Mammary epithelial cell (primary cell): ENCODE measurements at regions of chr13 and their contacts with region 1.

Region 1: GRCh38 chr13:22114630-22115311 is 443.9 kb downstream of the FGF9 start:
- DNase-seq: no peak
- H3K4me3 ChIP-seq: no peak overlapping the region
- H3K27ac ChIP-seq: no peak overlapping the region
- H3K4me1 ChIP-seq: no peaks in the 10 kb centered on the region
- H3K27me3 ChIP-seq: no peaks in the 10 kb centered on the region
- CTCF ChIP-seq: no peak

Region 2: DNA sequence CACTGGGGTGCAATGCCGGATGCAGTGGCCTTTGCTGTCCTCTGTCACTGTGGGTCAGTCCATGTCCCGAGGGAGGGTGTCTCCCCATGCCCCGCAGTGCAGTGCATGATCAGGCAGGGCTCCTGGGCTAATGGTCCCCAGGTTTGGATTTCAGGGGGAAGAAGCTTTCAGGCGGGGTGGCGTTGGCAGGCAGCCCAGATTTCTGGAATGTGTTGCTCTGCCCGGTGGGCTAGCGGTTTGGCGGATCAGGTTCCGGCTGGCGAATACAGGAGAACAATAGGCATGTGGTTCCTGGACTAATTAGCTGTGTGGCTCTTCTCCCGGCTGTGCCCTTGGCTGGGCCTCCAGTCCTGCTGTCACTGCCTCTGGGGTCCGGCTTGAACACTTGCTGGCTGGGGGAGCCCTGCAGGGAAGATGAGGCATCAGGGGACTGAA is 302.6 kb before region 1 on chr13:
- CTCF ChIA-PET with region 1: no interaction called
- dilution Hi-C with region 1: no loop called
- in situ Hi-C with region 1: no loop called
- intact Hi-C with region 1: no loop called
- DNase-seq: peak; percentile 2
- H3K4me3 ChIP-seq: no peak overlapping the region
- H3K27ac ChIP-seq: no peak overlapping the region
- H3K4me1 ChIP-seq: no peaks in the 10 kb centered on the region
- H3K27me3 ChIP-seq: no peaks in the 10 kb centered on the region
- CTCF ChIP-seq: no peak

Region 3: GRCh38 chr13:21948769-21949474 is 165.8 kb before region 1 on chr13:
- CTCF ChIA-PET with region 1: no interaction called
- dilution Hi-C with region 1: no loop called
- in situ Hi-C with region 1: no loop called
- intact Hi-C with region 1: no loop called
- DNase-seq: no peak
- H3K4me3 ChIP-seq: no peak overlapping the region
- H3K27ac ChIP-seq: no peak overlapping the region
- H3K4me1 ChIP-seq: no peaks in the 10 kb centered on the region
- H3K27me3 ChIP-seq: no peaks in the 10 kb centered on the region
- CTCF ChIP-seq: no peak

Region 4: GRCh38 chr13:22144806-22145205 is 30.0 kb after region 1 on chr13:
- CTCF ChIA-PET with region 1: no interaction called
- dilution Hi-C with region 1: loop called (anchors 5 kb)
- in situ Hi-C with region 1: no loop called
- intact Hi-C with region 1: no loop called
- DNase-seq: no peak
- H3K4me3 ChIP-seq: no peak overlapping the region
- H3K27ac ChIP-seq: no peak overlapping the region
- H3K4me1 ChIP-seq: no peaks in the 10 kb centered on the region
- H3K27me3 ChIP-seq: no peaks in the 10 kb centered on the region
- CTCF ChIP-seq: no peak

Region 5: DNA sequence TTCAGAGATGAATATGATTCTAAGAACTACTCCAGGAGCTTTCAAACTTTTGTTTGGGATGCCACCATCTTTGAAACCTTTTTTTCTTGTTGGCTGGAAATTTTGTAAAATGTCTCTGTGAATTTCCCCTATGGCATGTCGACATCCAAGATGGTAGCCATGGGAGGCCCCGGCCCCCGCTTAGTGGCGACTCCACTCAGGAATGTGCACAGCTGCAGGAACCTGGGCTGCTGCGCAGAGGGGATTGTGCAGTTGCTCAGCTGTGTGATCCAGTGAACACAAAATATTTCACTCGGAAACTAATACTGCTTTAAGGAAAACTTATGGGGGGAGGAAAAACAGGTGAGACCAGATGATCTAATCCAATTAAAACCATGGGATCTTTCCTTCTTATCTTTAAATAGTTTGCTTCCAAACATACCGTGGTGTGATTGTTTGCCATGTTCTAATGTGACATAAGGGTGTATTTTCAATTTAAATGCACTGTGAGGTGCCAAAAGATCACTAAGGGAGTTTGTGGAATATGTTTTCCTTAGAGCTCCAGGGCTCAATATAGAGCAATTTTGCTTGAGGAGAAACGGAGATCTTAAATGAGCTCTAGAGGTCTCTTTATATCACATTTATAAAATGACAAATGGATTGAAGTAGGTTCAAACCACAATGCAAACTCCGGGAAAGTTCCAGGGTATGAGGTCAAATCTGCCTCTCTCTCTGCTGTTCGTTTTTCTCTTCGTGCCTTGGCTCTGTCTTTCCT is 53.8 kb after region 1 on chr13:
- CTCF ChIA-PET with region 1: no interaction called
- dilution Hi-C with region 1: no loop called
- in situ Hi-C with region 1: no loop called
- intact Hi-C with region 1: no loop called
- DNase-seq: no peak
- H3K4me3 ChIP-seq: no peak overlapping the region
- H3K27ac ChIP-seq: no peak overlapping the region
- H3K4me1 ChIP-seq: no peaks in the 10 kb centered on the region
- H3K27me3 ChIP-seq: no peaks in the 10 kb centered on the region
- CTCF ChIP-seq: no peak

Region 6: DNA sequence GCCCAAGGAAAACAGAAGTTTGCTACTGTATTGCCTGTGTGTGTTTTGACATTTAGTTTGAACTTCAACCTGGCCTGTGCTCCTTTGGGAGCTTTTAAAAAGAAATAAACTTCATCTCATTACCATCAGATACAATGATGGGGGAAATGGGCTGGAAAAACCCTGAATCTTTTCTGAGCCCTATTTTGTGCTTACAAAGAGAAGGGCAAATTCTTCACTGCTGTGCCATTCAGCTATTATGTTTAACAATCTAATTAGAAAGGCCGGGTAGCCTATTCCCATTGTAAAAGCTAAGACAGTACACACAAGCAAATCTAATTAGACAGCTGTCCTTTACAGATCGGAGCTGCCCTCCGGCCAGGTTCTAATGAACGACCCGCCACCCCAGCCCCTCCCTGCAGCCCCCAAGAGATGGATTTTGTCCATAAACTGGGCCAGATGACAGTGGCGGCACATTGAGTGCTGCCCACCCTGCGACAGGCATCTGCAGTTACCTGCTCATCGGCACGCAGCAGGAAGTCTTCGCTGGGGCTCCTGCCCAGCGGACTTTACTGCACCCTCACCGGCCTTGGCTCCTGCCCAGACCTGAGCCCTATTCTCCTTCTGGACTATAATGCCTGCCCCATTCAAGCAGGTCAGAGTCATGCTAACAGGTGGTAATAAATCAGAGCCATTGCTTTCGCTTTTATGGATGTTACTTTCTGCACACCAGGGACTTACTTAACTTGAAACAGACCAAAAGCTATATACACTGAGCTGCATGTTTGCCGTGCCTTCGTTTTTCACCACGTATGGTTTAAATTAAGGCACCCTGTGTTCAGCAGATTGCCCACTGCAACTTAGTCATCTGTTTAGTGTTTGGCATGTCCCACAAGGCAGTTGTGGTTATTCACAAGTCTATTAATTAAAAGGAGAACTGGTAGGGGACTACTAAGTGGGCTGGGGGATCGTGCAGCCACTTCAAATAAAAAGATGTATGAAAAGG is 105.7 kb after region 1 on chr13:
- CTCF ChIA-PET with region 1: no interaction called
- dilution Hi-C with region 1: no loop called
- in situ Hi-C with region 1: loop called in 1 of 2 experiments (anchors 25 kb)
- intact Hi-C with region 1: no loop called
- DNase-seq: no peak
- H3K4me3 ChIP-seq: no peak overlapping the region
- H3K27ac ChIP-seq: no peak overlapping the region
- H3K4me1 ChIP-seq: no peaks in the 10 kb centered on the region
- H3K27me3 ChIP-seq: no peaks in the 10 kb centered on the region
- CTCF ChIP-seq: no peak